Activated T-helper 1 cell treated with anti-CD3 and anti-CD28 coated beads, Interleukin-12 subunit alpha, Interleukin-12 subunit beta, Interleukin-2, Interleukin-4 antibody, amounts not matched to agents 30 ng/mL and 10 ng/mL and 1 ng/mL, durations not matched to agents 14 hours and 24 hours and 36 hours (primary cell): ENCODE measurements at regions of chr3 and their contacts with region 1.

Region 1: GRCh38 chr3:3126477-3127431 is at the start of gene TRNT1:
- DNase-seq: peak; percentile 91
- H3K4me3 Mint-ChIP-seq: peak within 1 kb of the TSS; percentile 99
- H3K27ac Mint-ChIP-seq: peak within 1 kb of the TSS; percentile 99
- H3K4me1 Mint-ChIP-seq: peaks cover 30% of the 10 kb centered on the region
- H3K27me3 Mint-ChIP-seq: peaks cover 2% of the 10 kb centered on the region
- total RNA-seq, gene TRNT1: 52.4 and 53.5 TPM in 2 replicates

Region 2: DNA sequence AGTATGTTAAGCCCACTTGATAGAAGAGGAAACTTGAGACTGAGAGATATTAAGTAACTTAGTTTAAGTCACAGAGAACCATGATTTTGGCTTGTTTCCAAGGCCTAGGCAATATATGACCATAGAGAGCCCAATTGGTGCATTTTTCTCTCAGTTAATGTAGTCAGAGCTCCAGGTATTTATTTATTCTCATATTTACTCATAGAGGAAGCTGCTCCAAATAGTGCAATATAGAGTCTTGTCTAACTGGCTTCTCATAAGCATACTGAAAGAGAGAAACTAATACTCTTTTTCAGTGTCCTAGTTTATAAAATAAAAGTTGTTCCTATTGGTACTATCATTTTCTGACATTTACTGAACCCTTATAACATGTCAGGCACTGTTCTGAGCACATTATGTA is 15.2 kb after region 1 on chr3:
- intact Hi-C with region 1: loop called (anchors 2 kb)
- DNase-seq: no peak
- H3K4me3 Mint-ChIP-seq: no peak overlapping the region
- H3K27ac Mint-ChIP-seq: no peak overlapping the region
- H3K4me1 Mint-ChIP-seq: peaks cover 14% of the 10 kb centered on the region
- H3K27me3 Mint-ChIP-seq: no peaks in the 10 kb centered on the region

Region 3: DNA sequence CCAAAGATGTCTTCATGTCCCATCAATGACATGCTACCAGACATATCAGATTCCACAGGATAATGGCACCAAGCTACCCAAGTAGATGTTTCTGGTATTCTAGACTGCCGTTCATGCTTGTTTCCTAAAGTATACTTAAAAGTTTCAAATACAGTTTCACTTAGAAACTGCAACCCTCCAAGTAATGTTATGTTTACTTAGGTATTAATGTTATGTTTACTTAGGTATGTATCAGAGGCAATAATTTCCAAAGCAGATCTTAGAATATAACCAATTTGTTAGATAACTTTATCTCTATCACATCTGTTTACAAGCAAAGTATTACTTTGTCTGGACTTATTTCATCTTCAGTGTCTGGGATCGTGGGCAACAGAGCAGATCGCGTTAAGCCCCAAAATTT is 23.8 kb after region 1 on chr3:
- intact Hi-C with region 1: loop called (anchors 2 kb)
- DNase-seq: no peak
- H3K4me3 Mint-ChIP-seq: no peak overlapping the region
- H3K27ac Mint-ChIP-seq: no peak overlapping the region
- H3K4me1 Mint-ChIP-seq: peaks cover 7% of the 10 kb centered on the region
- H3K27me3 Mint-ChIP-seq: no peaks in the 10 kb centered on the region

Region 4: DNA sequence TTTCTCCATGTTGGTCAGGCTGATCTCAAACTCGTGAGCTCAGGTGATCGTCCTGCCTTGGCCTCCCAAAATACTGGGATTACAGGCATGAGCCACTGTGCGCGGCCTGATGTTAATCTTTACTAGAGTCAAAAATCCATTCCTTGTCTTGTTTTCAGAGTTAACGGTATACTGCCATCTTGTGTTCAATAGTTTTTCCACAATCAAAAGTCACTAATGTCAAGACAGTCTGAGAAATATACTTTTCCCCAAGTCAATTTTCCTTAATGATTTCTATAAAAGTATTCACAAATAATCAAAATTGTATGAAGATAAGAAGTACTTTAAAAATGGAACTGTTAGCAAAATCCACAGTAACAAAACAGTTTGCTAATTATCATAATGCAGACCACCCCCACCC is 44.2 kb after region 1 on chr3:
- intact Hi-C with region 1: loop called (anchors 1 kb)
- DNase-seq: no peak
- H3K4me3 Mint-ChIP-seq: peak overlapping the region; percentile 66
- H3K27ac Mint-ChIP-seq: peak overlapping the region; percentile 27
- H3K4me1 Mint-ChIP-seq: peaks cover 45% of the 10 kb centered on the region
- H3K27me3 Mint-ChIP-seq: no peaks in the 10 kb centered on the region

Region 5: DNA sequence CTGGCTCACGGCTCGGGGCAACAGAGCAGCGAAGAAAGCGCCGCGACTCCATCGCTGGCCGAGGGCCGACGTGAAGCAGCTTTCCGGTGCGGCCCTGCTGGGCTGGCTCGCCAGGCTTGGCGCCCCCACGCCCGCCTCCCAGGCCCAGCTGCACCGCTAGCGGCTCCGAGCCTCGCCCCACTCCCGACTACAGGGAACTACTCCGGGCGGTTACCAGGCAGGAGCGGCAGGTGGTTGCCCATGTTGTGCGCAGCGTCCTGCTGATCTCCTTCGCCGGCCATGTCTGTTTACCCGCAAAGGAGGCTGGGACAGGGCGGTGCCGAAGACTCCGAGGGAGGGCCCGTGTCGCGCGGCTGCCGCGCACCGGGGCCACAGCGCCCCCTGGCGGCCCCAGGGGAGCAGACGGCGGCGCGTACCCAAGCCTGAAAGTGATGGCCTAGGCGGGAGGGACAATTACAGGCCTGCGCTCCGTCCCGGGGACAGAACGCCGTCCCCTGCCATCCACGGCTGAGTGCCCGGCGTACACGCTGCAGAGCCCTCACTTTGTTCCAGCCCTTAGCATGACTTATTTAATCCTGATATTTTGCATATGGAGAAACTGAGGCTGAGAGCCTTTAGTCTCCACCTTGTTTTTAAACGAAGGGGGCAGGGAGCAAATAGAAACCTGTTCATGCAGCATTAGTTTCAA is 52.8 kb after region 1 on chr3 and contains the start of gene CRBN:
- intact Hi-C with region 1: loop called (anchors 1 kb)
- DNase-seq: peak; percentile 86
- H3K4me3 Mint-ChIP-seq: peak within 1 kb of the TSS; percentile 96
- H3K27ac Mint-ChIP-seq: peak within 1 kb of the TSS; percentile 85
- H3K4me1 Mint-ChIP-seq: peaks cover 48% of the 10 kb centered on the region
- H3K27me3 Mint-ChIP-seq: peaks cover 3% of the 10 kb centered on the region
- total RNA-seq, gene CRBN: 36.8 and 42.5 TPM in 2 replicates